AG04449 (cell line): ENCODE measurements at regions of chr6 and their contacts with region 1.

Region 1: GRCh38 chr6:52284460-52285176 is at the start of gene MCM3:
- DNase-seq: peak; percentile 95
- H3K4me3 ChIP-seq: peak within 1 kb of the TSS; percentile 83
- CTCF ChIP-seq: peak; percentile 4

Region 2: GRCh38 chr6:52310932-52311331 is 26.3 kb after region 1 on chr6:
- CTCF ChIA-PET with region 1: interaction called, 11 read pairs
- POLR2A ChIA-PET with region 1: no interaction called
- DNase-seq: no peak
- H3K4me3 ChIP-seq: no peak overlapping the region
- CTCF ChIP-seq: no peak

Region 3: DNA sequence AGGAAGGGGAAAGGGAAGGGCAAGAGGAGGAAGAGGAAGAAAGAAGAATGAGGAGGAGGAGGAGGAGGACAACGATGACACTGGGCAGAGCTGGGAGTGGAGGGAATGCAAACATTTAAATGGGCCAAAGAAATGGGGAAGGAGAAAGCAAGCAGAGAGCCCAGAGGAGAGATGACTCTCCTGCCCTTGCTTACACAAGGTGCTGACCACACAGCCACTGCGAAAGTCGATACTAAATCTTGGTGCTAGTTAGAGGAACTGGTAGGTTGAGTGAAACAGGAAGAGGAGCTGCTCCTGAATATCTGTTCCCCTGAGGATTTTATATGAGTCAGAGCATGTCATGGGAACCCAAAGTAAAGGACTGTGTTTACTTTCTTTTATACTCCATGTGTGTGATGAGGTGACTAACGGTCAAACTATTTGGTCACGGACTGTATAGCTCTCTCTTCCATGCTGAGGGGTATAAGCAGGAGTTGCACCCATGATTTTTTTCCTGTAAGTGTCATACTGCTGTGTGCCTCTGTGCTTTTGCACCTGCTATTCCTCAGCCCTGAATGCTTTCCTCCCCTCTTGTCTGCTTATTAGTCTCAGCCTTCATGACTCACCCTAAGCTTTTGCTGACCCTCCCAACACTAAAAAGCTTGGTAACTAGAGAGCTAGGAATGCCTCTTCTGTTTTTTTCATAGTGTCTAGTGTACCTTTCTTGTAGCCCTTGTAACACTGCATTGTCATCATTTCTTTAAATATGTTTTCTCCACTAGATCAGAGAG is 67.8 kb after region 1 on chr6:
- CTCF ChIA-PET with region 1: interaction called, 13 read pairs
- POLR2A ChIA-PET with region 1: interaction called, 5 read pairs
- DNase-seq: peak; percentile 91
- H3K4me3 ChIP-seq: peak overlapping the region; percentile 18; the same call in 1 of the 2 replicates
- CTCF ChIP-seq: no peak

Region 4: DNA sequence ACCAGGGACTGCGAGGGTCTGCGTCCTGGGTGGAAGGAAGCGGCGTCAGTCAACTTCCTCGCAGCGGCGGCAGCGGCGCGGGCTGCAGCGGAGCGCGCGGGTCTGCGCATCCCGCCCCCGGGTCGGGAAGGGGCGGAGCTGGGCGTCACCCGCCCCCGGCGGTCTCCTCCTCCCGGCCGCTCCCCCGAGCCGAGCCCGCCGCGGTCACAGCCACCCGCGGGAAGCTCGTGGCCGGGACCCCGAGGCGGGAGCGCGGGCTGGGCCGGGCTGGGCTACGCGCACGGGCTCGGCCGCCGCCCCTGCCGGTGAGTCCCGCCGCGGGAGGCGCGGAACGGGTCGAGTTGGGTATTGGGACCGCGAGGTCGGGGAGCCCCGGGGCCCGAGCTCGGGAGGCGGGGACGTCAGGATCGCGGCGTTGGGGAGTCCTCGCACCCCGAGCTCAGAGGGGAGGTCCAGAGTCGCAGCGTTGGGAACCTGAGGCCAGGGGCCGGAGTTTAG is 77.4 kb after region 1 on chr6 and contains the start of gene PAQR8:
- CTCF ChIA-PET with region 1: interaction called, 25 read pairs
- POLR2A ChIA-PET with region 1: interaction called, 4 read pairs
- DNase-seq: no peak
- H3K4me3 ChIP-seq: peak within 1 kb of the TSS; percentile 78
- CTCF ChIP-seq: no peak

Region 5: GRCh38 chr6:52389626-52390360 is 105.2 kb after region 1 on chr6:
- CTCF ChIA-PET with region 1: interaction called, 54 read pairs
- POLR2A ChIA-PET with region 1: no interaction called
- DNase-seq: no peak
- H3K4me3 ChIP-seq: no peak overlapping the region
- CTCF ChIP-seq: no peak

Region 6: DNA sequence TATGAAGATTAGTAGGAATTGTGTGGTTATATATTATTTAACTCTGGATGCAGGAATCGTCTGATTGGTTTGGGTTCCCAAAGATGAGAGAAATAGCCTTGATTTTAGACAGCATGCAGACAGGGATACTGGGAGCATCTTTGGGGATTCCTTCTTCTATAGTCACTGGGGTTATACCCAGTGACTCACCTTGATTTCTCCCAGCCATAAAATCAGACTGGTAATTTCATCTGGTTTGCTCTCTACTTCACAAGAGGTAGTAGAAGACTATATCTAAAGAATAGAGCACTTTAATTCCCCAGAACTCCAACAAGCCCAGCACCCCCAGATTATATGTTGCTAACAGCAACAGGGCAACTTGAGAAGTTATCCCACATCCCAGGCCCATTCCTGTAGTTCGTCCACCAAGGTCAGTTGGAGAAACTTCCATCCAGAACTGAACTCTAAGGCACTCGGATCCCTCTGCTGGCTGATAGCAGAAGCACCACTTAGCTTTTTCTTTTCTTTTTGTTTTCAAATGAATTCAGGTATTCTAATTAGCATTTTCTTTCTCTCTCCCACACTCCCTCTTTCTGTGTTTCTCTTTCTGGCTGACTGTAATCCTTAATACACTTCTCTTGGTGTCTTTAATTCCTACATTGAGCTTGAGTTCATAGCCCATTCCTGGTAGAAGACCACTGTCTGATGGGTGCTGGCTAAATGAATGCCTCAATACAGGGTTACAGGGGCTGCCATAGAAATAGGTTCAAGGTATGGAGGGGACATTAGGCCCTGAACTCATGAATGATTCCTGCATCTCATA is 115.1 kb after region 1 on chr6:
- CTCF ChIA-PET with region 1: interaction called, 299 read pairs
- POLR2A ChIA-PET with region 1: no interaction called
- DNase-seq: no peak
- H3K4me3 ChIP-seq: no peak overlapping the region
- CTCF ChIP-seq: peak; percentile 76